ENCODE measurements at regions of chr12 and their contacts with region 1.

Region 1: GRCh38 chr12:93563807-93564538 is 8.5 kb upstream of the SOCS2 start:
- DNase-seq: peak; percentile 97
- ATAC-seq: peak; percentile 98
- H3K4me3 ChIP-seq: no peak overlapping the region
- H3K27ac ChIP-seq: peak overlapping the region; percentile 65
- H3K4me1 ChIP-seq: peaks cover 27% of the 10 kb centered on the region
- H3K27me3 ChIP-seq: no peaks in the 10 kb centered on the region
- CTCF ChIP-seq: peak; percentile 55

Region 2: DNA sequence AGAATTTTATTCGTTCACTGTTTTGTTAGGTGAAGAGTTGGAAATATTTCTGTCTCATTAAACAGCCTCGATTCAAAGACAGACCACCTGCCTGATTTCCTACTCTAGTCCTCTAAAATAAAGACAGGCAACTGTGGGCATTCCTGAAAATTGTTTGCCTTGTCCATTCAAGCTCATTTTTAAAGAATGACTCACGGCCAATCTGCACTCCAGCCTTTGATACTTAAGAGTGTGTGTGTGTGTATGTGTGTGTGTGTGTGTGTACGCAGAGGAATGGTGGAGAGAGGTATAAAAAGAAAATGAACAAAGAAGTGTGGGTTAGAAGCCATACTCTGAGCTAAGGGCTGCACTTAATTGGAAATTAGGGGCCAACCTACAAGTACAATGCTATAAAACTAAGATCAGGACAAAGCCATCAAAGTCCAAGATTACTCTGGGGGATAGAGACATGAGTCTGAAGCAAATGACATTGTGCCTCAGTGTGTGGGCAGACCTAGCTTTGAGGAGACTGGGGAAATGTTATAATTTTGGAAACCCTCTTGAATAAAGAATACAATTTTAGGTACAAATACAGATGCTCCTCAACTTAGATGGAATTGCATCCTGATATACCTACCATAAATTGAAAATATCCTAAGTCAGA is 37.1 kb before region 1 on chr12:
- CTCF ChIA-PET with region 1: interaction called, 3 read pairs
- POLR2A ChIA-PET with region 1: no interaction called
- intact Hi-C with region 1: loop called (anchors 1 kb)
- DNase-seq: peak; percentile 95
- ATAC-seq: peak; percentile 92
- H3K4me3 ChIP-seq: no peak overlapping the region; the same call in 1 of the 2 replicates
- H3K27ac ChIP-seq: no peak overlapping the region
- H3K4me1 ChIP-seq: peaks cover 21% of the 10 kb centered on the region
- H3K27me3 ChIP-seq: no peaks in the 10 kb centered on the region
- CTCF ChIP-seq: no peak

Measured in PC-3 (cell line).